HEK293 (cell line): ENCODE measurements at regions of chr3 and their contacts with region 1.

Region 1: DNA sequence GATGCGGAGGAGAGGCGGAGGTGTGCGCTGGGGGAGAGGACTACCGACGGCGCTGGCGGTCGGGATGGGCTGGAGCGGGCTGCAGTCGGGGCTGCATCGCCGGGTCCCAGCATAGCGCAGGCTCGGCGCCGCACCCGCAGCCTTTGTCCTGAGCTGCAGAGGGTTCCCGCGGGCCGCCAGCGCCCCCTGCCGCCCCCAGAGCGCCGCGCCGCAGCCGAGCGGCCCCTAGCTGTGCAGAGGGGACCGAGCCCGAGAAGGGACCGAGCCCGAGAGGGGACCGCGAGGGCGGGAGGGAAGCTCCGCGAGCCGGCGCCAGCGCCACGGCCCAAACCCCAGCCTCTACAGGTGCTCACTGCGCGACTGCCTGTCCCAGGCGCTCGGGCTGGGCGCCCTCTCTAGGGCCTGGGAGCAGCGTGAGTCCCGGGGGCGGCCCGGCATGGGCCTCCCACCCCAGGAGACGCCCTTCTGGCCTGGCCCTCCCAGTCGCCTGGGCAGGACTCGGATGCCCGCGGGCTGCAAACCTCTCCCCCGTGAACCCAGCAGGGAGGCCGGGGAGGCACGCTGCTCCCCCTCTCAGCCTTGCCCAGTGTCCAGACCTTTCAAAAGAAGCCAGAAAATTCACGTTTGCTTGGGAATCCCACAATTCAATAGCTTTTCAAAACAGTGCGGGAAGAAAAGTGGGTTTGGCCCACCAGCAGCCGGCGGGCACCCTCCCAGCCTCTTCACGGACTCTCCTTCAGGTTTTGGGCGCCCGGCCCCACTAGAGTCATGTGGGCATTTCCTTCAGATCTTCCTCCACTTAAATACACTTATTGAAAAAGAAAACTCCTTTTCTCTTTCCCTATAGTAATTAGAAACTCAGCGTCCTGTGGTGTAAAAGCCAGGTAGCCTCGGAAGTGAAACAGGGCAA is 134.7 kb downstream of the TPRA1 start:
- H3K4me3 ChIP-seq: no peak overlapping the region; the same call in 1 of the 2 replicates
- H3K27ac ChIP-seq: no peak overlapping the region
- H3K4me1 ChIP-seq: no peaks in the 10 kb centered on the region
- CTCF ChIP-seq: peak; percentile 89

Region 2: GRCh38 chr3:126752303-126752842 is 703.4 kb before region 1 on chr3:
- CTCF ChIA-PET with region 1: interaction called, 10 read pairs
- POLR2A ChIA-PET with region 1: no interaction called
- H3K4me3 ChIP-seq: no peak overlapping the region
- H3K27ac ChIP-seq: no peak overlapping the region
- H3K4me1 ChIP-seq: no peaks in the 10 kb centered on the region
- CTCF ChIP-seq: peak; percentile 71

Region 3: GRCh38 chr3:127374086-127375010 is 81.4 kb before region 1 on chr3:
- CTCF ChIA-PET with region 1: interaction called, 12 read pairs
- POLR2A ChIA-PET with region 1: no interaction called
- H3K4me3 ChIP-seq: no peak overlapping the region
- H3K27ac ChIP-seq: no peak overlapping the region
- H3K4me1 ChIP-seq: no peaks in the 10 kb centered on the region
- CTCF ChIP-seq: no peak

Region 4: GRCh38 chr3:127445581-127446343 is 10.0 kb before region 1 on chr3:
- CTCF ChIA-PET with region 1: interaction called, 11 read pairs
- POLR2A ChIA-PET with region 1: no interaction called
- H3K4me3 ChIP-seq: no peak overlapping the region
- H3K27ac ChIP-seq: no peak overlapping the region
- H3K4me1 ChIP-seq: no peaks in the 10 kb centered on the region
- CTCF ChIP-seq: no peak